ENCODE measurements at regions of chr10 and their contacts with region 1.

Region 1: GRCh38 chr10:72061491-72061890 is 26.9 kb downstream of the SPOCK2 start:
- DNase-seq: no peak
- H3K4me3 ChIP-seq: no peak overlapping the region
- H3K27ac ChIP-seq: no peak overlapping the region
- H3K4me1 ChIP-seq: peaks cover 10% of the 10 kb centered on the region
- H3K27me3 ChIP-seq: no peaks in the 10 kb centered on the region
- CTCF ChIP-seq: peak; percentile 23; the same call in 1 of the 2 replicates

Region 2: GRCh38 chr10:71850637-71851464 is 210.6 kb before region 1 on chr10 and contains the start of gene PSAP:
- CTCF ChIA-PET with region 1: no interaction called
- POLR2A ChIA-PET with region 1: no interaction called
- intact Hi-C with region 1: no loop called
- DNase-seq: peak; percentile 97 to 100
- H3K4me3 ChIP-seq: peak within 1 kb of the TSS; percentile 87
- H3K27ac ChIP-seq: peak within 1 kb of the TSS; percentile 76
- H3K4me1 ChIP-seq: peaks cover 47% of the 10 kb centered on the region
- H3K27me3 ChIP-seq: no peaks in the 10 kb centered on the region
- CTCF ChIP-seq: no peak
- total RNA-seq, gene PSAP: 683 and 1,027 TPM in 2 replicates

Region 3: DNA sequence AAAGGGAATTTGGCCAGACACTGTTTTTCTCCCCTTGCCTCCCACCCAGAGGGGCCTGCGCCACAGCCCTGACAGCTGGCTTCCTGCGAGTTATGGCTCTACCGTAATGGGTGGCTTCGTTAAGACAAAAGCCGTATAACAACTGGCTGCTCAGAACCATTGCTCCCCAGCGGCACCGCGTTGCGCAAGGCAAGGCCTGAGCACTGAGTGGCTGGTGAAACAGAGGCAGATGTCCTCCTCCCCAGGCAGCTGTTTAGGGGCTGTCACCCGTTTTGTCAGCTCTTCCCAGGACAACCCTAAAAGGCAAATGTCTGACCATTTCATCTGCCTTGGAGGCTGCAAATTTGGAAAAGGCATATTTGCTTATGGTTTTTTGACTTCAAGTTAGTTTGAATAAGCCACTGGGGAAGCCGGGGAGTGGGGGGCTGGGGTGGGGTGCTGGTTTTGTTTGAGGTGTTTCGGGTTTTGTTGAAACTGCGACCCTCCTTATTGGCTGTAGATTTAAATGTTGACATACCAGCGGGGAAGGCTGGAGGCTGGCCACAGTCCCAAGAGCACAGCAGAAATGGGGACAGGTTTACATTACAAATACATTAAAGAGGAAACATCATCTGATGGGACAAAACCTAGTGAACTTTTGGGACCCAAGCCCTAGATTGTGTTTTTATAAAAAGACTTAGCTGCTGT is 27.5 kb after region 1 on chr10:
- CTCF ChIA-PET with region 1: interaction called, 3 read pairs
- POLR2A ChIA-PET with region 1: interaction called, 12 read pairs
- intact Hi-C with region 1: no loop called
- DNase-seq: peak in 1 of 2 experiments; percentile 1
- H3K4me3 ChIP-seq: no peak overlapping the region
- H3K27ac ChIP-seq: no peak overlapping the region
- H3K4me1 ChIP-seq: peaks cover 27% of the 10 kb centered on the region
- H3K27me3 ChIP-seq: no peaks in the 10 kb centered on the region
- CTCF ChIP-seq: no peak

Region 4: DNA sequence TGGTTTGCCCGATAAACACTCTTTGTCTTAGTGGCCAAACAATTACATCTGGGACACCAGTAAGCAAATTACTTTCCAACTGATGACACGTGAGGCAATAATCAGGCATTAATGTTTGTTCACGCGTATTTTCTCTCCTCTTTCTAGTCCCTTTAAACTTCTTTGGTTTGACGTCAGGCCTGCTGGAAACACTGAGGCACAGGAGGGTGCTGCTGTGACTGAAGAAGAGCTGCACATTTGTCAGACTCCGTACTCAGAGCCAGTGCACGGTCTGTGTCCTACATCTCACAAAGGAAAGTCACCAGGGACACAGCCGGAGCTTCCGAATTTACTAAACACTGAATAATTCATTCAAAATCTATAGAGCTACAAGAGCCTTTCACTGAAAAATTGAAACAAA is 96.7 kb after region 1 on chr10:
- CTCF ChIA-PET with region 1: no interaction called
- POLR2A ChIA-PET with region 1: no interaction called
- intact Hi-C with region 1: no loop called
- DNase-seq: no peak
- H3K4me3 ChIP-seq: no peak overlapping the region
- H3K27ac ChIP-seq: no peak overlapping the region
- H3K4me1 ChIP-seq: no peaks in the 10 kb centered on the region
- H3K27me3 ChIP-seq: no peaks in the 10 kb centered on the region
- CTCF ChIP-seq: no peak

Region 5: GRCh38 chr10:72625608-72626443 is 564.3 kb after region 1 on chr10 and contains the start of gene MICU1:
- CTCF ChIA-PET with region 1: no interaction called
- POLR2A ChIA-PET with region 1: interaction called, 10 read pairs
- intact Hi-C with region 1: no loop called
- DNase-seq: peak; percentile 90 to 96
- H3K4me3 ChIP-seq: peak within 1 kb of the TSS; percentile 80
- H3K27ac ChIP-seq: peak within 1 kb of the TSS; percentile 19
- H3K4me1 ChIP-seq: peaks cover 18% of the 10 kb centered on the region
- H3K27me3 ChIP-seq: no peaks in the 10 kb centered on the region
- CTCF ChIP-seq: no peak
- total RNA-seq, gene MICU1: 65.3 and 70.5 TPM in 2 replicates